ENCODE measurements at regions of chr2 and their contacts with region 1.

Region 1: GRCh38 chr2:9205963-9206948 is at the start of gene ASAP2:
- DNase-seq: no peak
- ATAC-seq: peak; percentile 74
- H3K4me3 ChIP-seq: peak within 1 kb of the TSS; percentile 66 to 82
- H3K27ac ChIP-seq: peak within 1 kb of the TSS; percentile 68
- H3K4me1 ChIP-seq: peaks cover 17 to 34% of the 10 kb centered on the region in 2 experiments
- H3K27me3 ChIP-seq: no peaks in the 10 kb centered on the region
- CTCF ChIP-seq: peak; percentile 46 to 79 (median 73); a peak in 4 of 6 replicates
- POLR2A ChIP-seq: peak; percentile 42
- RAD21 ChIP-seq: peak; percentile 70
- total RNA-seq, gene ASAP2: 16.5 TPM

Region 2: DNA sequence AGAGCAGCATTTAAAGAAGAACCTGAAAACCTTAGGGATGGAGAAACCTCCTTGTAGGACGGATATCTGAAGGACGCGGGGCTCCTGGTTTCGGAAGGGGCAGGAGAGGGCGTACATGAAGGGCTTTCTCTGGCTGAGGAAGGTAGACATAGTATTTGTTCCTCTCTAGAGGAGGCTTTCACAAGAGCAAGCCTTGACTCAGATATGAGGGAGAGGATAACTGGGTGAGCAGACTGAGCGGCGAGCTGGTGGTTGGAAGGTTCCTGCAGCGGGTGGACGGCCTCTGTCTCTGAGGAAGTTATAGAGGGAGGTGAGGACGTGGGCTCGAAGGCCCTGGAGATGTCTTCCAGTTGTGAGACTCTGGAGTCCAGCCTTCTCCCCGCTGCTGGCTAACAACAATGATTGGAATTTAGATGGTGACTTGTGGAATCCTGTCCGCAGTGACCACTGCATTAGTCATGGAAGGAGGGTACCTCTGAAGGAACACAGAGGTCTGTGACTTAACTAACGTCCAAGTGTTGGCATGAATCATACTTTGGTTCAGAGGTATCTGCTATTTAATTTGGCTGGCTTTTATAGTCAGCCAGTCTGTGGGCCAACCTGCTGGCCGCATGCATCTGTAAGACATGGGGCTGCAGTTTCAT is 81.3 kb after region 1 on chr2:
- CTCF ChIA-PET with region 1: no interaction called
- POLR2A ChIA-PET with region 1: no interaction called
- RAD21 ChIA-PET with region 1: no interaction called
- intact Hi-C with region 1: loop called (anchors 1 kb)
- DNase-seq: peak; percentile 97
- ATAC-seq: peak; percentile 86
- H3K4me3 ChIP-seq: peak overlapping the region in 1 of 2 experiments; percentile 47; a peak in 2 of 4 replicates
- H3K27ac ChIP-seq: peak overlapping the region; percentile 72
- H3K4me1 ChIP-seq: peaks cover 38 to 60% of the 10 kb centered on the region in 2 experiments
- H3K27me3 ChIP-seq: no peaks in the 10 kb centered on the region
- CTCF ChIP-seq: no peak
- POLR2A ChIP-seq: no peak
- RAD21 ChIP-seq: peak; percentile 31; the same call in 1 of the 2 replicates

Region 3: GRCh38 chr2:9370746-9371145 is 164.5 kb after region 1 on chr2:
- CTCF ChIA-PET with region 1: no interaction called
- POLR2A ChIA-PET with region 1: no interaction called
- RAD21 ChIA-PET with region 1: no interaction called
- intact Hi-C with region 1: loop called (anchors 2 kb)
- DNase-seq: no peak
- ATAC-seq: no peak
- H3K4me3 ChIP-seq: no peak overlapping the region
- H3K27ac ChIP-seq: no peak overlapping the region
- H3K4me1 ChIP-seq: no peaks in the 10 kb centered on the region
- H3K27me3 ChIP-seq: no peaks in the 10 kb centered on the region
- CTCF ChIP-seq: no peak
- POLR2A ChIP-seq: no peak
- RAD21 ChIP-seq: no peak

Measured in HCT116 (cell line).